ENCODE measurements at regions of chr5 and their contacts with region 1.

Region 1: GRCh38 chr5:66553916-66554575 is 42.1 kb upstream of the MAST4 start:
- DNase-seq: peak; percentile 77
- H3K4me3 Mint-ChIP-seq: no peak overlapping the region
- H3K27ac Mint-ChIP-seq: peak overlapping the region; percentile 13
- H3K4me1 Mint-ChIP-seq: peaks cover 29% of the 10 kb centered on the region
- H3K27me3 Mint-ChIP-seq: peaks cover 22% of the 10 kb centered on the region

Region 2: GRCh38 chr5:66324357-66324756 is 229.7 kb before region 1 on chr5:
- CTCF ChIA-PET with region 1: no interaction called
- intact Hi-C with region 1: loop called (anchors 1 kb)
- DNase-seq: no peak
- H3K4me3 Mint-ChIP-seq: no peak overlapping the region
- H3K27ac Mint-ChIP-seq: no peak overlapping the region
- H3K4me1 Mint-ChIP-seq: peaks cover 10% of the 10 kb centered on the region
- H3K27me3 Mint-ChIP-seq: no peaks in the 10 kb centered on the region

Region 3: DNA sequence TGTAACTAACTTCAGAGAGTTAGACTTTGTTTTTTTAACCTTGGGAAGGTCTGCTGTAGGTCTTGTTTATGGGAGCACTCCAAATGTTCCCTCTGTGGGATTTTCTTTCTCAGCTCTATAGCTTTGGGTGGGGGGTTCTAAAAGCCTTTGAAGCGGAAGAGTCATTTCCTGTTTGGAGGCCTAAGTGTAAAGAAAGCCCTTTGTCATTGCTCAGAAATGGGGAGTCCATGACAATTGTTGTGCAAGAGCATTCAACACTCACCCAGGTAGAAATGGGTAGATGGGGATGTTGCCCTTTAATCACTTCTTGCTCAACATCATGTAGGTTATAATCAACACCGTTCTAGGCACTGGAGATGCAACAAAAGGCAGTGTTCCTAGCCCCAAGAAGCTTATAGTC is 11.8 kb after region 1 on chr5:
- CTCF ChIA-PET with region 1: no interaction called
- intact Hi-C with region 1: loop called (anchors 1 kb)
- DNase-seq: no peak
- H3K4me3 Mint-ChIP-seq: no peak overlapping the region
- H3K27ac Mint-ChIP-seq: peak overlapping the region; percentile 53
- H3K4me1 Mint-ChIP-seq: peaks cover 8% of the 10 kb centered on the region
- H3K27me3 Mint-ChIP-seq: peaks cover 8% of the 10 kb centered on the region

Region 4: DNA sequence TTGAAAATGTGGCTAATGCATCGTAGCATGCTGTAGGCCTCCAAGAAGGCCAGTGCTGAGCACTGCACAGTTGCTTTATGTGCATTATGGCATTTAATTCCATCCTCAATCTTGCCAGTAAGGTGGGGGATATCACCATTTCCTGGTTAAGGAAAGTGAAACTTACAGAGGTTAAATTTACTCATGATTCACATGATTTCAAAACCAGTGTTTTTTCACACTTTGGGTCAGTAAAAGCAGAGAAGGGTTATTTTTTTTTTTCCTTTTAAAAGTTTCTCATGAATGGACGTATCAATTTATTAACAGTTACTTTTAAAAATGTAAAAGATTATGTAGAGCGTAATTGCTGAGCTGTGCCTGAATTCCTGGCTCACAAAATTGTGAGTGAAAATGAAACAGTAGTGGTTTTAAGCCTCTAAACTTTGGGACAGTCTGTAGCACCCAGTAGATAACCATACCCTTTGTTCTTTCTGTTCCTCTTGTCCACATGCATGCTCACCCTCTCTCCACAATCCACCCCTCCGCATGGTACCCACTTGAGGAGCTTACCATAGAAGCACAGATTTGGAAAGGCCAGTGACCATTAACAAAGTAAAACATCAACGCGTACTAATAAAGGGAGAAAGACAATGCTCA is 63.3 kb after region 1 on chr5:
- CTCF ChIA-PET with region 1: no interaction called
- intact Hi-C with region 1: loop called (anchors 1 kb)
- DNase-seq: peak; percentile 12
- H3K4me3 Mint-ChIP-seq: no peak overlapping the region
- H3K27ac Mint-ChIP-seq: no peak overlapping the region
- H3K4me1 Mint-ChIP-seq: peaks cover 19% of the 10 kb centered on the region
- H3K27me3 Mint-ChIP-seq: peaks cover 20% of the 10 kb centered on the region

Region 5: GRCh38 chr5:66840511-66841013 is 286.5 kb after region 1 on chr5:
- CTCF ChIA-PET with region 1: no interaction called
- intact Hi-C with region 1: loop called (anchors 2 kb)
- DNase-seq: peak; percentile 63
- H3K4me3 Mint-ChIP-seq: peak overlapping the region; percentile 10
- H3K27ac Mint-ChIP-seq: peak overlapping the region; percentile 83
- H3K4me1 Mint-ChIP-seq: peaks cover 27% of the 10 kb centered on the region
- H3K27me3 Mint-ChIP-seq: peaks cover 28% of the 10 kb centered on the region